ENCODE measurements at regions of chrX and their contacts with region 1.

Region 1: DNA sequence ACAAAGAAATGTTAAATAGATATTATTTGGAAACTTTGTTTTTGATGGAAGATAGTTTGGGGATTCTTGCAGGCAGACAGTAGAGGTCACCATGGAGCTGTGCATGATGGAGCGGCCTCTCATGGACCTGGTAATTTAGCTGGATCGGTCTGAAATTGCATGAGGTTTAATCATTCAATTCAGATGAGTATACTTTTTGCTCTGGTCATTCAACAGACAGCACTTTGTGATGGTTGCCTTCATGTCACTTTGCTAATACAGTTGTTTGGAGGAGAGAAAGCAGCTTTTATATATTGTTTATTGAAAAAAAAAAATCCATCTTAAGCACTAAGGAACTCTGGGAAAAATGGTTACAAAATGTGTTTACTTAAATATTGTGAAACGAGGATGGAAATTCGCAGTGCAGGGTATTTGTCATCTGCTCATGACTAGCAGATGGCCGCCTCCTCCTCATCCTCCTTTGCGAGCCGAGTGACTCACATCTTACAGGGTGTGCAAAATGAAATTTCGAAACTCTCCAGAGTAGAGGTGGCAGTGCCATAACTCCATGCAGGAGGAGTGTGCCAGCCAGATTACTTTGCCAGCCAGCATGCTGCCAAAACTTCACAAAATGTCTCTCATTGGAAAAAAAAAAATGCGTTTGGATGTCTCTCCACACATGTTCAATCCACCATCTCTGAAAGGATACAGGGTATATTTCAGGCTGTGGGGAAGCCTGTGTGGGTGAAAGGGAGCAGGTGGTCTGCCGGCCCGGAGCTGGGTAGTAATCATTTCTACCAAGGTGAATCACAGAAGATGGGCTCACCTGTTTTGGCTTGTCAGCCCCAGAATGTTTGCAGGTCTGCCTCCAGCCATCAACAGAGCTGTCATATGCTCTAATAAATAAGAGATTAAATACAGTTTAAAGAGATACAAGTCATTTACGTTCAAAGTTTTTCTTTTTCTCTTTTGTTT is 314.9 kb upstream of the DIPK2B start:
- DNase-seq: peak; percentile 60 to 89
- H3K4me3 ChIP-seq: no peak overlapping the region
- H3K27ac ChIP-seq: peak overlapping the region in 1 of 2 donors; percentile 2
- H3K4me1 ChIP-seq: peaks cover 0 to 6% of the 10 kb centered on the region in 2 donors
- H3K27me3 ChIP-seq: no peaks in the 10 kb centered on the region
- CTCF ChIP-seq: peak in 2 of 3 experiments; percentile 44 to 52

Region 2: DNA sequence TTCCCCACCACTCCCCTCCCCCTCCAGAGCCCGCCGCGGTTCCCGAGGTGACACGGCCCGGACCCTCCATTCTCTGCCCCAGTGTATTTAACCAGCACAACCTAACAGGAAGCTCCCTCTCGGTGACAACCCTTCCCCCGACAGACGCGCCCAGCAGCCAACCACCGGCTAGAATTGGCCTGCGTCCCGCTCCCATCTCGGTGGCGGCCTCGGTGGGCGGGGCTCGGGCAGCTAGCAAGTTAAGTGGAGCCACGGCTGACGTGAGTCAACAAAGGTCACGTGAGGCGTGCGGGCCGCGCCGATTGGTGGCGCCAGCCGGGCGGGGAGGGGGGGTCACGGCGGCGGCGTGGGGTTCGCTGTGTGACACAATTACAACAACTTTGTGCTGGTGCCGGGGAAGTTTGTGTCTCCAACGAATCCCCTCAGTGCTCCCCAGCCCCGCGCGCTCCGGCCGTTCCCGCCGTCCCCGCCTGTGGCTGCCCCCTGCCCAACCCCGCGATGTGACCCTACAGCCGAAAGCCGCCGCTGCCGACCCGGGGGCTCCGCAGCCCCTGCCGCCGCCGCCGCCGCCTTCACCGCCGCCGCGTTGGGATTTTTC is 642.6 kb before region 1 on chrX and contains the start of gene KDM6A:
- intact Hi-C with region 1: loop called (anchors 10 kb)
- DNase-seq: peak; percentile 98 to 99
- H3K4me3 ChIP-seq: peak within 1 kb of the TSS; percentile 89 to 100
- H3K27ac ChIP-seq: peak within 1 kb of the TSS; percentile 98 to 100
- H3K4me1 ChIP-seq: peaks cover 2 to 29% of the 10 kb centered on the region in 2 donors
- H3K27me3 ChIP-seq: no peaks in the 10 kb centered on the region
- CTCF ChIP-seq: no peak
- total RNA-seq, gene KDM6A: 16.3 TPM

Region 3: DNA sequence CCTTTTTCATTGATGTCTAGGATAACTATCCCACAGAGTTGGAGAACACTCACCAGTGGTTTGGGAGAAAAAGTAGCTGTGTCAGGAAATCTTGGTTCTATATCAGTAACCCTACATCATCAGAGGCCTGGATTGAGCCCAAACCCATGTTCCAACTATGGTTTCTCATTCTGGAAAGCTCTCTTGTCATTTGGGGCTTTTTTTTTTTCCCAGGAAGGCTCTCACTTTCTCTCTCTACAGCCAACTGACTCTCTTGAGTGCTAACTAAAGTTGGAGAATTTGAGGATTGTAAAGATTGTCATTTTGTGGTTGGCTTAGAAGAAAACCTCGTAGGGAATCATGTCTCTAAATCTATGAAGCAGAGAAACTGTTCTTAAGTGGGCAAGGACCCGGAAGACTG is 86.7 kb before region 1 on chrX:
- intact Hi-C with region 1: no loop called
- DNase-seq: no peak
- H3K4me3 ChIP-seq: no peak overlapping the region
- H3K27ac ChIP-seq: no peak overlapping the region
- H3K4me1 ChIP-seq: no peaks in the 10 kb centered on the region
- H3K27me3 ChIP-seq: no peaks in the 10 kb centered on the region
- CTCF ChIP-seq: no peak

Region 4: DNA sequence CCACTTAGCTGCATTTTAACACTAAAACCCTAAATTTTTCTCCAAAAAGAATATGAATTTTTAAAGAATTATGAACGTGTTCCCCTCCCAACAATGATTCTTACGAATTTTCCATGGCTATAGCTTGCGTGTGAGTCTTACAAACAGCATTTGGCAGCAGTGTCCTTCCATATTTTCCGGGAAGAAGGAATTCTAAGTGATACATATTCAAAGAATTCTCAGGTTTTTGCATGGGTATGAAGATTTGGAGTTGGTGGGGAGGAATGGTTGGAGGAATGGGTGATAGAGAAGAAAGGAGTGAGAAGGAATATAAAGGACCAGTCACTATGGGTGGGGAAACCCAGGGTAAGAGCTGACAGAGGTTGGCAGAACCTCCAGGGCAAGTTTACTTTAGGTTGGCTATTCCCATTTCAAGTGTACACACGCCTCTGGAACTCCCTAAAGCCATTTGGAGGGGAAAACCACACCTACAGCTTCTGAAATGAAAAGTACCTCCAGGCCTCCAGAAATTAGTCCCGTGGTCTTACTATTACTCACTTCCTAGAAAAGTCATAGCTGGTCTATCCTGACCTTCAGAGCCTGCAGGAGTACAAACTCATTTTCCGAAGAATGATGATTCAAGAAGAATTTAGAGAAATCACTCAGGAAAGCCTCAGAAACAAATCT is 106.0 kb after region 1 on chrX:
- intact Hi-C with region 1: loop called (anchors 5 kb)
- DNase-seq: no peak
- H3K4me3 ChIP-seq: no peak overlapping the region
- H3K27ac ChIP-seq: peak overlapping the region; percentile 86
- H3K4me1 ChIP-seq: peaks cover 9 to 23% of the 10 kb centered on the region in 2 donors
- H3K27me3 ChIP-seq: no peaks in the 10 kb centered on the region
- CTCF ChIP-seq: no peak

Region 5: DNA sequence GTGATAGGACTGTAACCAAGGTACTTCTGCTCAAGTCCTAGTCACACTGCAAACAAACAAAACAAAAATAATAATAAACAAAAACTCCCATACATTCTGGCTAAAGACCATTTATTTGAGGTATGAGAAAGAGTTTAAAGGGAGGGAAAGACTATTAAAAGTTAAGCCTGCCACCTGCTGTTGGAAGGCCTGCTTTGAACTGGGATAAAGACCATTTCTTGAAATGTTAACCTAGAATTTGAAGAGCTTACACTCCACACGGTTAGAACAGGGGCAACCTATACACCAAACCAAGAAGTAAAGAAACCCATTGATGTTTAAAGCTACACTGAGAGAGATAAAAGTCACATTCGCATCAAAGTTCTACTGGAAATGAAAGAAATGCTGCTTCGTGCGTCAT is 233.8 kb after region 1 on chrX:
- intact Hi-C with region 1: loop called (anchors 2 kb)
- DNase-seq: no peak
- H3K4me3 ChIP-seq: no peak overlapping the region
- H3K27ac ChIP-seq: no peak overlapping the region
- H3K4me1 ChIP-seq: peaks cover 0 to 3% of the 10 kb centered on the region in 2 donors
- H3K27me3 ChIP-seq: no peaks in the 10 kb centered on the region
- CTCF ChIP-seq: peak in 2 of 3 experiments; percentile 16 to 41

Region 6: GRCh38 chrX:45769761-45770582 is 254.4 kb after region 1 on chrX:
- intact Hi-C with region 1: loop called (anchors 1 kb)
- DNase-seq: peak; percentile 55 to 86
- H3K4me3 ChIP-seq: peak overlapping the region; percentile 46 to 61
- H3K27ac ChIP-seq: peak overlapping the region; percentile 76 to 77
- H3K4me1 ChIP-seq: no peaks in the 10 kb centered on the region
- H3K27me3 ChIP-seq: no peaks in the 10 kb centered on the region
- CTCF ChIP-seq: no peak

Region 7: GRCh38 chrX:45806410-45807121 is 291.0 kb after region 1 on chrX:
- intact Hi-C with region 1: loop called (anchors 5 kb)
- DNase-seq: no peak
- H3K4me3 ChIP-seq: peak overlapping the region; percentile 38 to 59
- H3K27ac ChIP-seq: peak overlapping the region; percentile 62 to 67
- H3K4me1 ChIP-seq: no peaks in the 10 kb centered on the region
- H3K27me3 ChIP-seq: no peaks in the 10 kb centered on the region
- CTCF ChIP-seq: no peak

Region 8: DNA sequence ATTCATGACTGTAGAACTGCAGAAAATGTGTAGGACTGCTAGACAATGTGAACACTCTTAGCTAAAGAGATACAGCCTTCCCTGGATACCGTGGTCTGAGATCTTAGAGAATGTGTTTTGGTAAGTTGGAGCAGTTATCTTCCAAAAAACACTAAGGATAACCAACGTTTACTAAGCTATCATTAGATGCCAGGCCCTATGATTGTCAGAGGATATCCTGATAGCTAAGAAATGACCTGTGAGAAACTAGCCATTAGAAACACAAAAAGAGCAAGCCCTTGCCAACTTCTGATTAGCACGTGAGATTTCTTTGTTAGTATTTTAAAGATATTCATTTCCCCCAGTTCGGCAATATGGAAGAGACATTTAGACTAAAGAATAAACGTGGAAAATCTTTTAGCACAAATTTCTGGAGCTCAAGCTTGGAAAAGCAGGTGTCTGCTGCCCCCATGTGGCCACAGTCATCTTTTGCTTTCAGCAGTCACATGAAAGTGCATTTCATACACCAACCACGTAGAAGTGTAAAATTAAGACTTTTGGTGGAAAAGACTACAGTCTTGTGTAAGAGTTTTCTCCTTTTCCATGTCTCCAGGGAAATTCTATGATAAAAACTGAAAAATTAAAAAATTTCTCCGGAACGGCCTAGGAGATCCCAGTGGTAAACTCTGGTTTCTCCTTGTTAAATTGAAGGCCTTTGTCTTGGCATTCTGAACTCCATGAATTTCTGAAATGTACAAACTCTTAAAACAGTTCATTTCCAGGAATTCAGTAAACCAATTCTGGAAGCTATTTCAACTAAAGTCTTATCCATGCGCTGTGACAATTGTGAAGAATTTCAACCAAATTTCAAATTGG is 893.2 kb after region 1 on chrX:
- intact Hi-C with region 1: loop called (anchors 10 kb)
- DNase-seq: peak in 1 of 2 donors; percentile 76
- H3K4me3 ChIP-seq: no peak overlapping the region
- H3K27ac ChIP-seq: no peak overlapping the region
- H3K4me1 ChIP-seq: no peaks in the 10 kb centered on the region
- H3K27me3 ChIP-seq: no peaks in the 10 kb centered on the region
- CTCF ChIP-seq: peak; percentile 66 to 91 (median 83)